HEK293T (cell line): ENCODE measurements at regions of chr2 and their contacts with region 1.

Region 1: DNA sequence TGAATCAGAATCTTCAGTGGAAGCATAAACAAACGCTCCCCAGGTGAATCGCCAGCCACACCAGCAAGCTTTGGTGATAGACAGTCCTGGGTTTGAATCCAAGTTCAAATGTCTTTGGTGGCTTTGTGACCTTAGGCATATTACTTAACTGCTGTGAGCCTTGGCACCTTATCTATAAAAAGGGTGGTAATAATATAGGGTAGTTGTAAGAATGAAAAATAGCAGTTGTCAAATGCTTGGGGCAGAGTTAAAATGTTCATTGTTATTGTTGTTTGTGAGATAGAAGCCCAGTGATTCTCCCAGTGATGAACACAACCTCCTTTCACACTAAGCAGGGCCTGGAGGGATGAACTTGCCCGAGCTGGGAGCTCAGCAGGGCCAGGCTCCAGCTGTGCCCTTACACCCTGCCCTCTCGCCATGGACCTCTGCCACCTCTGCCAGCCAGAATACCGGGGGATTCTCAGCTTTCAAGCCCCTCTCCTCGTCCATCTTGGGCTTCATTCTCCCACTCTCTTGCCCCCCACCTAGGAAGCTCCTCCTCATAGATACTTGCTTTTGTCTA is 6.1 kb upstream of the TMBIM1 start:
- DNase-seq: no peak

Region 2: DNA sequence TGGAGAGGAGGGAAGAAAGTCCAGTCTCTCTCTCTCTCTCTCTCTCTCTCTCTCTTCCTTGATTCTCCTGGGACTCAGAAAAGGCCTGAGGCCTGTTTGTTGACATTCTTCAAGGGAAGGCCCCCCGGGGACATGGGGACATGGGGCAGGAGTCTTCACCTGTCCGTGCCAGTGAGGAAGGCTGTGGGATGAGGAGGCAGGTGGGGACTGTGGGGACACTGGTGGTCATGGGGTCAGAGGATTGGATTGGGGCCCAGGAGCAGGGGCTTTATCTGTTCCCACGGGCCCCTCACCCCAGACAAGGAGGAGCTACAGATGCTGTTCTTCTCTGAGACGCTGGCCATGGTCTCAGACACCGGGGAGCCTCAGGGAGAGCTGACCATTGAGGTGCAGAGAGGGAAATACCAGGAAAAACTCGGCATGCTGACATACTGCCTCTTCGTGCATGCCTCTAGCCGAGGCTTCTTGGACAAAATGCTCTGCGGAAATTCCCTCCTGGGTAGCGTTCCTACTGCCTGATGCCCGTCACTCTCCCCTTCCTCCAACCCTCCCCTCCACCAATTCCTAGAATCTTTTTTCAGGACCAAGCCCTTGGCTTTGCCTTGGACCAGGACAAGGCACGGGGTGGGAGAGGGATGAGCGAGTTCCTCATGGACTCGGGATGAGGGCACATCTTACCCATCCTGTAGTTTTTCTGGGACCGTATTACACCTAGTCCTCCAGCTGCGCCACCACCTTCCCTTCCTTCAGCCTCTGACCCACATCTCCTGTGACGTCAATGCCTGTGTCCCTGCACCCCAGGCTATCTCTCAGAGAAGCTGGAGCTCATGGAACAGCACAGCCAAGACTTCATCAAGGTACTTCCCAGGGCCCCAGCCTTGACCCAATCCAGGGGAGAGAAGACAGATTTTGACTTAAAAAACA is 59.1 kb after region 1 on chr2:
- CTCF ChIA-PET with region 1: interaction called, 11 read pairs
- POLR2A ChIA-PET with region 1: no interaction called
- DNase-seq: peak; percentile 8